ENCODE measurements at regions of chr4 and their contacts with region 1.

Region 1: GRCh38 chr4:144174401-144175067 is 34.0 kb upstream of the GYPA start:
- H3K4me3 Mint-ChIP-seq: no peak overlapping the region
- H3K27ac Mint-ChIP-seq: no peak overlapping the region
- H3K4me1 Mint-ChIP-seq: no peaks in the 10 kb centered on the region
- H3K27me3 Mint-ChIP-seq: no peaks in the 10 kb centered on the region

Region 2: GRCh38 chr4:144113546-144113945 is 61.0 kb before region 1 on chr4:
- intact Hi-C with region 1: no loop called
- H3K4me3 Mint-ChIP-seq: no peak overlapping the region
- H3K27ac Mint-ChIP-seq: no peak overlapping the region
- H3K4me1 Mint-ChIP-seq: no peaks in the 10 kb centered on the region
- H3K27me3 Mint-ChIP-seq: no peaks in the 10 kb centered on the region

Region 3: DNA sequence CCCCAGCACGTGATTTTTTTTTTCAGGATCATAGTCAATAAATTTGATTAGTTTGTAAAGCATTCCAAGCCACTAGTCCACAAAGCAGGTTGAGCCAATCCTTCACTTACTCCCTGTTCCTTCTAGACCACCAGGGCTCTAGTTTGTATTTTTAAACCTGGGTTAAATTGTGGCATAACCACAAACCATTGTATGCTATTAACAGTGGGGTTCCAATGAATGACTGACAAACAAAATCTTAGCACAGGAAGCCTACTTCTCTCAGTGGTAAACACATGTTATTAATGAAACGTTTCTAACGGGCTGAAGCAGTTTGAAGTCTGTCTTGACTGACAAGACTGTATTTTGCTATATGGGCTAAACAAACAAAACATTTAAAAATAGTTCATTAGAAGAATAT is 14.6 kb after region 1 on chr4:
- intact Hi-C with region 1: no loop called
- H3K4me3 Mint-ChIP-seq: no peak overlapping the region
- H3K27ac Mint-ChIP-seq: no peak overlapping the region
- H3K4me1 Mint-ChIP-seq: no peaks in the 10 kb centered on the region
- H3K27me3 Mint-ChIP-seq: no peaks in the 10 kb centered on the region

Region 4: GRCh38 chr4:144787365-144788258 is 613.1 kb after region 1 on chr4:
- intact Hi-C with region 1: loop called (anchors 5 kb)
- H3K4me3 Mint-ChIP-seq: no peak overlapping the region
- H3K27ac Mint-ChIP-seq: no peak overlapping the region
- H3K4me1 Mint-ChIP-seq: no peaks in the 10 kb centered on the region
- H3K27me3 Mint-ChIP-seq: no peaks in the 10 kb centered on the region

Region 5: GRCh38 chr4:145234091-145234706 is 1059.7 kb after region 1 on chr4:
- intact Hi-C with region 1: loop called (anchors 10 kb)
- H3K4me3 Mint-ChIP-seq: no peak overlapping the region
- H3K27ac Mint-ChIP-seq: no peak overlapping the region
- H3K4me1 Mint-ChIP-seq: no peaks in the 10 kb centered on the region
- H3K27me3 Mint-ChIP-seq: peaks cover 2% of the 10 kb centered on the region